Ascending aorta (tissue), 2 donors: ENCODE measurements at regions of chr10 and their contacts with region 1.

Region 1: DNA sequence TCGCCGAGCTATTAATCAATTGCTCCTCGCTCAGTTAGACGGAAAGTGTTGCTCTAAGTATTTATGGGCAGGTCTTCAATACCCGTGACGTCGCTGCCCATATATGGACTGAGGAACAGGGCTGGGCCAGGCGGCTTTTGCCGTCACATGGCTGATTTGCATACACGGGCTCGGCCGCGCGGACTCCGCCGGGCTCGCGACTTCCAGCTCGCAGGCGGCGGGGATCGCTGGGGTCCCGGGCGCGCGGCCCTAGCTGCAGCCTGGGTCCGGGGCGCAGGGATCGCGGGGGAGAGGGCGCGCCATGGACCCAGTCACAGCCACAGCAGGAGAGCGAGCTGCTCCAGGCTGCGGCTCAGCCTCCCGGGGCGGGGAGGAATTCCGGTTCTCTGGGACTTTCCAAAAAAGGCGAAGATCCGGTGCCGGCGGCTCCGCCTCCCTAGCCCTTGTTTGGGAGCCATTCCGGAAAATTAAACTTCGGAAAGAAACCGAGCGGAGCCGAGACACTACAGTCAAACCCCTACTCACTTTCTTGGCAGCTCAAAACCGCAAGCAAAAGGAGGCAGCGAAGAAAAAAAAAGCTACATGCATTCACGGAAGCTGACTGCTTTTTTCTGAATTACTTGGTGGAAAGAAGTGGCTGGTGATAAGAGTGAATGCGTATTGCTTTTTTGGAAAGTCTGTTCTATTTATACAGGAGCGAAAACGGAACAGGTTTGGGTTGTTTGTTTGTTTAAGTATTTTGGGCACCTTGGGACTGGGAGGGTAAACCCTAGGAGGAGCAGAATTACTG is at the start of gene EGR2:
- DNase-seq: peak; percentile 88 to 98
- H3K4me3 ChIP-seq: peak within 1 kb of the TSS; percentile 86 to 88
- H3K27ac ChIP-seq: peak within 1 kb of the TSS; percentile 86 to 89
- H3K4me1 ChIP-seq: peaks cover 22 to 32% of the 10 kb centered on the region in 2 donors
- H3K27me3 ChIP-seq: peaks cover 8% of the 10 kb centered on the region
- CTCF ChIP-seq: no peak
- total RNA-seq, gene EGR2: 11.9 TPM

Region 2: DNA sequence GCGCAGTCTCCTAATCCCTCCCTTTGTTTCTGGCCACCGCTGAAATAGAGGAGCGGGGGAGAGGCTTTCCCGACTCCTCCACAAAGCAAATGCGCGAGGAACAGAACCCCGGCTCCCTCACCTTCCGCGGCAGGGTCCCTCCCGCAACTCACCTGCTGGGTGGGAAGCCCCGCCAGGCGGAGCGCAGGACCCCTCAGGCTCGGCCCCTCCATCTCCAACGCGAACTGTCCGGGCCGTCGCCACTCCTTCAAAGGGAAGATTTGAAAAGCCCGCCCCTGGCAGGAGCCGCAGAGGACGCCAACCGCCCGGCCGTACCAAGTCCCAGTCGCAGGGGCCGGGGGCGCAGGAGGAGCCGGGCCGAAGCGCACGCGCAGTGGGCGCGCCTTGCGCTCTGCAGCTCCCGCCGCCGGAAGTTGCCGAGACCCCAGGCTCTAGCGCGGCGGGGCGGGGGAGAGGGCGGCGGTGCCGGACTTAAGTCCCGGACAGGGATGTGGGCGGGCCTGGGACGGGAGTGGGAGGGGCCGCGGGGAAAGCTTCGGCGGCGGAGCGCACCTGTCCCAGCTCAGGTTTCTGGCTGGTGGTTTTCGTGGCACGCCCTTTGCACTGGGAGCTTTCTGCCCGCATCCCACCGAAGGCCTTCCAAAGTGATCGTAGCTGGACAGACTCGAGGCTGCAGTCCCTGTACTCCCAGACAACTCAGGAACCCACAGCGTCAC is 548.0 kb before region 1 on chr10 and contains the start of gene RTKN2:
- intact Hi-C with region 1: loop called (anchors 10 kb)
- DNase-seq: peak; percentile 12 to 79
- H3K4me3 ChIP-seq: peak within 1 kb of the TSS; percentile 70 to 84
- H3K27ac ChIP-seq: no peak within 1 kb of the TSS
- H3K4me1 ChIP-seq: peaks cover 0 to 6% of the 10 kb centered on the region in 2 donors
- H3K27me3 ChIP-seq: no peaks in the 10 kb centered on the region
- CTCF ChIP-seq: no peak
- total RNA-seq, gene RTKN2: not detected

Region 3: GRCh38 chr10:62437696-62438095 is 378.8 kb before region 1 on chr10:
- intact Hi-C with region 1: loop called (anchors 5 kb)
- DNase-seq: no peak
- H3K4me3 ChIP-seq: no peak overlapping the region
- H3K27ac ChIP-seq: no peak overlapping the region
- H3K4me1 ChIP-seq: peaks cover 0 to 5% of the 10 kb centered on the region in 2 donors
- H3K27me3 ChIP-seq: no peaks in the 10 kb centered on the region
- CTCF ChIP-seq: peak; percentile 63 to 79 (median 69)

Region 4: DNA sequence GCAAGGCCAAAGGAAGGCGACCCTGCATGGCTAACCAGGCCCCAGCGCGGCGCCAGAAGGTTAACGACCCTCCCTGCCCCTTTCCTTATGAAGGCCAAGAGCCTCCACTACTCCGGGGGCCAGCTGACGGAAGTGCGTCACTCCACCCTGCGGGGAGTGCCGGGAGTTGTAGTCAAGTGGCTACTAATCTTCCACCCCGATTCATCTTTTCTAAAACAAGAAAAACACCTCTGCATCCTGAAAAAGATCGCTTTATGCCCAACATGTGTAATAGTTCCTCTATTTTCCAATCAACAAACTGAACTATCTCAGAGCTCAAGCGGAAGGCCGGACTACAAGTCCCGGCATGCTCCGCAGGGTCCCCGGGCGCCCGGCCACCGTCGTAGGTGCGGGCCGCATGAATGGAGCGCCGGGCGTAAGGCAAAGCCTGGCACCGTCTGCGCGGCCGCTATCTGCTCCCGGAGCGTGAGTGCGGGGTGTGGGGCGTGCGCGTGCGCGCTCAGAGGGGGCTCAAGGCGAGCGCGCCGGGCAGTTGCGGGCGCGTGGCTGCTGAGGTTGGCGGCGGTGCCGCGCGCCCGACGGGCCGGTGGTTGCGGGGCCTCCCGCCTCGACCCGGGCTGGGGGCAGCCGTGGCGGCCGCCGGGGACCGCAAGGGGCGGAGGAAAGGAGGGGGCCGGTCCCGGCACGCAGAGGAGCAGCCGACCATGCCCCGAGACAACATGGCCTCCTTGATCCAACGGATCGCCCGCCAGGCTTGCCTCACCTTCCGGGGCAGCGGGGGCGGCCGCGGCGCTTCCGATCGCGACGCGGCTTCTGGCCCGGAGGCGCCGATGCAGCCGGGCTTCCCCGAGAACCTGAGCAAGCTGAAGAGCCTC is 11.9 kb before region 1 on chr10 and contains the start of gene ADO:
- intact Hi-C with region 1: loop called (anchors 1 kb)
- DNase-seq: peak in 1 of 2 donors; percentile 88
- H3K4me3 ChIP-seq: peak within 1 kb of the TSS; percentile 69 to 97
- H3K27ac ChIP-seq: peak within 1 kb of the TSS; percentile 95 to 97
- H3K4me1 ChIP-seq: peaks cover 0 to 24% of the 10 kb centered on the region in 2 donors
- H3K27me3 ChIP-seq: no peaks in the 10 kb centered on the region
- CTCF ChIP-seq: no peak
- total RNA-seq, gene ADO: 22.1 TPM

Region 5: DNA sequence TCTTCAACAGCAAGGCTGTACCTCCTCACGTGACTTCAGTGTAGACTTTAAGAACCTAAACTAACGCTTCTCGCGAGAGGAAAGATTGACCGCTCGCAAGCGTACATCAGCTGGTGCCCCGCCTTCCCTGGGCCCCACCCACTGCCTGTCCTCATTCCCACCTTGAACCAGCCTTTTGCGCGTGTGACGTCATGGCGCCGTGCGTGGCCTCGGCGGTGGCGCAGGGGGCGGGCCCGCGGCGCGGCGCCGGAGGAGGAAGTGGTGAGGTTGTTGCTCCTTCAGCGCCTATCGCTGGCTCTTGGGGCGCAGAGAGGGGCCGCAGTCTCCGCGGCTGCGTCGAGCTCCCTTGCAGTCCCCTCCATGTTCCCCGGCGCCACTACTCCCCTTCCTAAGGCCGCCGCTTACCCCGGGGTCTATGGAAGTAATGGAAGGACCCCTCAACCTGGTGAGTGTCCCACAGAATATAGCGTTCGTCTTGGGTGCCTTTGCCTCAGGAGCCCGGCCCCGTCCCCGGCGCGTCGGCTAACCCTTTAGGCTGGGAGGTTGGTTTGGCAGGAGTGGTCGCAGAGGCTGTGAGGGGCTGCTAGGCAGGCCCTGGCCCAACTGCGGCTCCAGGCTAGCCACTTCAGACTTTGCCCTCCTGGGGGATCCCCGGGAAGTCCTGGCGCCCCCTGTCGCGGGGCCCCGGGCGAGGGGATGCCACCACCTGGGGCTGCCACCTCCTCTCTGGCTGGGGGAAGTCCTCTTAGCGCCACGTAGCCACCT is 316.7 kb after region 1 on chr10 and contains the start of gene NRBF2:
- intact Hi-C with region 1: loop called (anchors 2 kb)
- DNase-seq: peak; percentile 95 to 99
- H3K4me3 ChIP-seq: peak within 1 kb of the TSS; percentile 97 to 99
- H3K27ac ChIP-seq: peak within 1 kb of the TSS; percentile 95 to 97
- H3K4me1 ChIP-seq: peaks cover 4 to 10% of the 10 kb centered on the region in 2 donors
- H3K27me3 ChIP-seq: no peaks in the 10 kb centered on the region
- CTCF ChIP-seq: peak in 1 of 3 experiments; percentile 21
- total RNA-seq, gene NRBF2: 4.2 TPM

Region 6: DNA sequence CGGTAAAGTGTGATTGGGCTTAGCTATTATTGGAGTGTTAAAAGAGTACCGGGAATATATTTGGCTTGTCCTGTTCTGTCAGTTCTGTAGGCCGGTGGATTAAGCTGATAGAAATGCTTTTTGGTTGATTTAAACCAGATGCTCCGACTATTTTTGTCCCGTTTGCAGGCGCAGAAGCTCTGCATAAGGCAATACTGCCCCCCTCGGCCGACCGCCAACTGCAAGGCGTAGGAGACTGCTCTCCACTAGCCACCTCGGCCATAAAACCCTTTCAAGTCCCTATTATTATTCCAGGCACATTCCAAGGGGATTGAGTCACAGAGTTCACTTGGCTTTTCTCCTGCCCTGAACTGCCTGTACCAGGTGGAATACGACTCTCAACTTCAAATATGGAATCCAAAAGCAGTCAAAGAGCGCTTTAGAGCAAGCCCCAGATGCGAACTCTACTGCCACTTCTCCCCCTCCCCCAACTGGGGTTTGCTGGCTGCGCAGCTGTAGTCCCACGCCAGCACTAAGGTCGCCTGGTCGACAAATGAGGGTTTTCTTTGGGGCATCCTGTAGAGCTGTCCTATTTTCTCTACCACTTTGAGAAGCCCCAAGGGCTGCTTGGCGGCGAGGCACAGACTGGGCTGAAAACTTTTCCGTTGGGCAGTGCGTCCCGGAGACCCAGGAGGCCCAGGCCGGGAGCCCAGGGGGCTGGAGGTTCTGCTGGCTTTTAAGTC is 813.0 kb after region 1 on chr10:
- intact Hi-C with region 1: loop called (anchors 5 kb)
- DNase-seq: peak; percentile 83 to 99
- H3K4me3 ChIP-seq: peak overlapping the region; percentile 67 to 70
- H3K27ac ChIP-seq: peak overlapping the region; percentile 90 to 99
- H3K4me1 ChIP-seq: peaks cover 0 to 20% of the 10 kb centered on the region in 2 donors
- H3K27me3 ChIP-seq: no peaks in the 10 kb centered on the region
- CTCF ChIP-seq: peak; percentile 67 to 74 (median 73)

Region 7: GRCh38 chr10:63798599-63799498 is 982.3 kb after region 1 on chr10:
- intact Hi-C with region 1: loop called (anchors 10 kb)
- DNase-seq: peak; percentile 58 to 91
- H3K4me3 ChIP-seq: peak overlapping the region in 1 of 2 donors; percentile 35
- H3K27ac ChIP-seq: peak overlapping the region; percentile 73 to 74
- H3K4me1 ChIP-seq: peaks cover 5 to 18% of the 10 kb centered on the region in 2 donors
- H3K27me3 ChIP-seq: no peaks in the 10 kb centered on the region
- CTCF ChIP-seq: peak in 1 of 3 experiments; percentile 24